ENCODE measurements at regions of chr11 and their contacts with region 1.

Region 1: GRCh38 chr11:121318848-121319834 is 26.6 kb downstream of the SC5D start:
- DNase-seq: no peak
- ATAC-seq: peak; percentile 87
- H3K4me3 Mint-ChIP-seq: no peak overlapping the region
- H3K27ac Mint-ChIP-seq: no peak overlapping the region
- H3K4me1 Mint-ChIP-seq: peaks cover 17% of the 10 kb centered on the region
- H3K27me3 Mint-ChIP-seq: peaks cover 2% of the 10 kb centered on the region
- CTCF ChIP-seq: peak; percentile 61

Region 2: DNA sequence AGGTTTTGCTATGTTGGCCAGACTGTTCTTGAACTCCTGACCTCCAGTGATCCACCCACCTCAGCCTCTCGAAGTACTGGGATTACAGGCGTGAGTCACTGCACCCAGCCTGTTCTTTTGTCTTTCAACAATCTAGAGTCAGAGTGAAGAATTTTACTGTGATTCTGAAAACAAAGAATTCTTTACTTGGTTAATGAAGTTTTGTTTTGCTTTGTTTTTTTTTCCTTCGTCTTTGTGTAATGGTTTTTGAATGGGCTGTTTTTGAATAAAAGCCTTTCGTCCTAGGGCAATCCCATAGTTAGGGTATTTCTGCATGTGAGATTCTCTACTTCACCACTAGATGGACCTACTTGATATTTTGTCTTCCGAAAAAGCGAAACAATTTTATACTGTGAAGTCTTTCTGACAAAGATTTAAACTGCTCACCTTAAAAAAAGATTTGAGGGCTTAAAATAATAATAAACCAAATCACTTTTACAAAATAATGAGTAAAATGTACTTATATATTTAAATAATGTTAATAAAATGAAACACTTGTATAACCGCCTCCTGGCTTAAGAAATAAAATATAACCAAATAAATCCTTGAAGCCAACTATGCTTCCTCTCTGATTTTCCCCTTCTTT is 70.0 kb before region 1 on chr11:
- CTCF ChIA-PET with region 1: no interaction called
- POLR2A ChIA-PET with region 1: no interaction called
- intact Hi-C with region 1: loop called (anchors 2 kb)
- DNase-seq: no peak
- ATAC-seq: peak; percentile 73
- H3K4me3 Mint-ChIP-seq: no peak overlapping the region
- H3K27ac Mint-ChIP-seq: no peak overlapping the region
- H3K4me1 Mint-ChIP-seq: peaks cover 3% of the 10 kb centered on the region
- H3K27me3 Mint-ChIP-seq: peaks cover 4% of the 10 kb centered on the region
- CTCF ChIP-seq: peak; percentile 72

Region 3: GRCh38 chr11:121292495-121293287 is 26.4 kb before region 1 on chr11 and contains the start of gene SC5D:
- CTCF ChIA-PET with region 1: no interaction called
- POLR2A ChIA-PET with region 1: no interaction called
- intact Hi-C with region 1: no loop called
- DNase-seq: peak; percentile 94
- ATAC-seq: peak; percentile 85
- H3K4me3 Mint-ChIP-seq: peak within 1 kb of the TSS; percentile 94
- H3K27ac Mint-ChIP-seq: peak within 1 kb of the TSS; percentile 97
- H3K4me1 Mint-ChIP-seq: peaks cover 50% of the 10 kb centered on the region
- H3K27me3 Mint-ChIP-seq: no peaks in the 10 kb centered on the region
- CTCF ChIP-seq: no peak
- total RNA-seq, gene SC5D: 35.2 and 40.4 TPM in 2 replicates

Region 4: DNA sequence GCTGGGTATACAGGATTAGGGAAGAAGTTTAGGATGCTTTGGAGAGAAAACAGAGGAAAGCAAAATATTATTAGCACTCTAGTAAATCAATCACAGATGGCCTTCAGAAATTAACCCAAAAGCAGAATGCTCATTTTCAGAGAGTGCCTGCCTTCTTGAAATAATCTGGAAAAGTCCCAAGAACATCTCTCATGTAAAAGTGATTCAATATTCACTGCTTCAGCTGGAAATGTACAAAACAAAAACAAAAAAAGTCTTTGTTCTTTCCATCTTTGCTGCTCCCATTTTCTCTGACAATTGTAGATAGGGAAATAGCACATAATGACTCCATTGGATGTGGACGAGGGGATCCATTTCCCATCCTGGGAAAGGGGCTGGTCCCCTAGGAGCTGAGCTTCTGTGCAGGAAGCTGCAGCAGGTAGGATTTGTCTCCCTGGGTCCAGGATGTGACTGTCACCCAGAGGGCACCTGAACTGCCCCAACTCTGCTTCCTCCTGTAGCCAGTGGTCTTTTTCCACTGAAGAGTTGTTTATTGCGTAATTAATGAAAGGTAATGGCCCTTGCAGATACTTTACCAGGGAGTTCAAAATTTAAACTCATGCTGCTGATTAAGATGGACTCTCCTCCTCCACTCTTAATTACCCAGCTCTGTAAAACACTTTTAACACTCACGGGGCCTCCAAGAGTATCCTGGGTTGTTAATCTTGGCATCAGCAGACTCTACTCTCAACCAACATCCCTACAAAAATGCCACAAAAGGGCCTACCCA is 31.4 kb after region 1 on chr11:
- CTCF ChIA-PET with region 1: no interaction called
- POLR2A ChIA-PET with region 1: no interaction called
- intact Hi-C with region 1: no loop called
- DNase-seq: no peak
- ATAC-seq: no peak
- H3K4me3 Mint-ChIP-seq: no peak overlapping the region
- H3K27ac Mint-ChIP-seq: no peak overlapping the region
- H3K4me1 Mint-ChIP-seq: peaks cover 2% of the 10 kb centered on the region
- H3K27me3 Mint-ChIP-seq: peaks cover 3% of the 10 kb centered on the region
- CTCF ChIP-seq: no peak

Region 5: DNA sequence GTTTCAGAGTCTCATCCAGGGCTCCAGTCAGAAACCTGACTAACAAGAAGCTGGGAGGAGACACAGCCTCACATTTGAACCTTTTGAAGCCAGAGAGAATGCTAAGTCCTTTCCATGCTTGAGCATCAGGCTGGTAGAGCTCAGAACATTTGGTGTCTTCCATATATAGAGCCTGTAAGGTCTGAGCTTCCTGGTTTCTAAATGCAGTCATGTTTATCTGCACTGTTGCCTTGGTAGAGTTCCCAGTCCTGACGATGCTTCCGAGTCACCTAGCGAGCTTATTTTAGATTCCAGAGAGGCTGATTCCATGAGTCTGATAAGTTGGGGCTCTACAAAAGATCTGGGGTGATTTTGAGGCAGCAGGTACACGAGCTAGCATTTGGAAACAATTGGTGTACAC is 64.6 kb after region 1 on chr11:
- CTCF ChIA-PET with region 1: interaction called, 5 read pairs
- POLR2A ChIA-PET with region 1: no interaction called
- intact Hi-C with region 1: loop called (anchors 1 kb)
- DNase-seq: no peak
- ATAC-seq: no peak
- H3K4me3 Mint-ChIP-seq: no peak overlapping the region
- H3K27ac Mint-ChIP-seq: no peak overlapping the region
- H3K4me1 Mint-ChIP-seq: peaks cover 12% of the 10 kb centered on the region
- H3K27me3 Mint-ChIP-seq: no peaks in the 10 kb centered on the region
- CTCF ChIP-seq: no peak

Region 6: DNA sequence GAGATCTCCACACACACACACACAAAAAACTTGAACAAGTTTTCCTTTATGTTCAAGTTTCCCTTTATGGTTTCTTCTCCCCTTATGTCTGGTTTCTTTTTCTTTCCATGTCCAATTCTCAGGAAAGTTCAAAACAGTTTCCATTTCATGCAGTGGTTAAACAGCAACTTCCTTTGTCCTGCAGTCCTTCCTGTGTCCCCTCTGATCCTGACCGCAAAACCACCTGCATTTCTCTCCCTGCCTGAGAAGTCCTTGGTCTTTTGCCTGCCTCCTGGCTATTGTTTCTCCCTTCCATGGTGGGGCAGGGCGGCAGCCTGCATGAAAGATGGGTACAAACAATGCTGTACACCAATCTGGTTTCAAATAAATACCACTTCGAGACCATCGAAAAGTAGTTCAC is 74.7 kb after region 1 on chr11:
- CTCF ChIA-PET with region 1: no interaction called
- POLR2A ChIA-PET with region 1: no interaction called
- intact Hi-C with region 1: no loop called
- DNase-seq: no peak
- ATAC-seq: no peak
- H3K4me3 Mint-ChIP-seq: no peak overlapping the region
- H3K27ac Mint-ChIP-seq: no peak overlapping the region
- H3K4me1 Mint-ChIP-seq: peaks cover 17% of the 10 kb centered on the region
- H3K27me3 Mint-ChIP-seq: no peaks in the 10 kb centered on the region
- CTCF ChIP-seq: no peak

Region 7: DNA sequence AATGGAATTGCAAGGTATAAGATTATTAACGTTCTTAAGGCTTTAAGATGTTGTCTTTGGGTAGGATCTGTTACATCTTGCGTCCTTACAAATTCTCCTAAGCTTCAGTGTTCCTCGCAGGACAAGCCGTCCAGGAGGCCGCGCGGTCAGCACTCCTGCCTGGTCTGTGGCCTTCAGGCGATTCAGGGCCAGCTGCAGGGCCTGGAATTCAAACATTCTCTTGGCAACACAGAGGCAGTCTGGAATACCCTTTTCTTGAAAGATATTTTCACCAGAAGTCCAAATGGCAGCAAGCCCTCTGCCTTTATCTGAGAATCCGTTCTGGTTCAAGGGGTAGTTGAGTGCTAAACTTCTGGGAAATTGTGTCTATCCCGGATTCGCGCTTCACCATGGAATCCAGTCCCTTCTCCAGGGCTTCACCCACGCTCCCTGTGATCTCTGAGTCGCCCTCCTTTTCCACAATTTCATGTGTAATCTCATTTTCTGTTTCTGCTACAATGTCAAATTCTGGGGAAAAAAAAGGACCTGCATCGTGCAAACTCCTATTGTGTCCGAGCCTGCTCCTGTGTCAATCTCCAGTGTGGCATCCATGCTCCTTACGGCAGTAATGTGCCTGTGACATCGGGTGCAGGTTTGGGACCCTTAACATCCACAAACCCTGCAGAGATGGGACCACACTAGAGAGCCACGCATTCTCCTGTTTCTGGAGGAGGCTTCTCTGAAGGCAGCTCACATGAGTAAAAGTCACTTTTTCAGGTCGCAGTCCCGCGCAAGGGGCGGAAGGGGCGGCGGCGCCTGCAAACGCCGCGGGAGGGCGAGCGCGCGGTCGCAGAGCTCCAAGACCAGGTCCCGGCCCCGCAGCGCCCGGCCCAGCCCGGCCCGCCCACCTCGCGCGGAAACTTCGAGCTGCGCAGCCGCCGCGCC is 107.6 kb after region 1 on chr11:
- CTCF ChIA-PET with region 1: interaction called, 3 read pairs
- POLR2A ChIA-PET with region 1: interaction called, 3 read pairs
- intact Hi-C with region 1: loop called (anchors 2 kb)
- DNase-seq: peak; percentile 58
- ATAC-seq: peak; percentile 43
- H3K4me3 Mint-ChIP-seq: peak overlapping the region; percentile 70
- H3K27ac Mint-ChIP-seq: peak overlapping the region; percentile 64
- H3K4me1 Mint-ChIP-seq: peaks cover 88% of the 10 kb centered on the region
- H3K27me3 Mint-ChIP-seq: peaks cover 2% of the 10 kb centered on the region
- CTCF ChIP-seq: no peak

Region 8: GRCh38 chr11:121464352-121464946 is 145.3 kb after region 1 on chr11:
- CTCF ChIA-PET with region 1: interaction called, 4 read pairs
- POLR2A ChIA-PET with region 1: interaction called, 9 read pairs
- intact Hi-C with region 1: loop called (anchors 5 kb)
- DNase-seq: no peak
- ATAC-seq: peak; percentile 51
- H3K4me3 Mint-ChIP-seq: peak overlapping the region; percentile 61
- H3K27ac Mint-ChIP-seq: peak overlapping the region; percentile 89
- H3K4me1 Mint-ChIP-seq: peaks cover 97% of the 10 kb centered on the region
- H3K27me3 Mint-ChIP-seq: no peaks in the 10 kb centered on the region
- CTCF ChIP-seq: no peak

Region 9: DNA sequence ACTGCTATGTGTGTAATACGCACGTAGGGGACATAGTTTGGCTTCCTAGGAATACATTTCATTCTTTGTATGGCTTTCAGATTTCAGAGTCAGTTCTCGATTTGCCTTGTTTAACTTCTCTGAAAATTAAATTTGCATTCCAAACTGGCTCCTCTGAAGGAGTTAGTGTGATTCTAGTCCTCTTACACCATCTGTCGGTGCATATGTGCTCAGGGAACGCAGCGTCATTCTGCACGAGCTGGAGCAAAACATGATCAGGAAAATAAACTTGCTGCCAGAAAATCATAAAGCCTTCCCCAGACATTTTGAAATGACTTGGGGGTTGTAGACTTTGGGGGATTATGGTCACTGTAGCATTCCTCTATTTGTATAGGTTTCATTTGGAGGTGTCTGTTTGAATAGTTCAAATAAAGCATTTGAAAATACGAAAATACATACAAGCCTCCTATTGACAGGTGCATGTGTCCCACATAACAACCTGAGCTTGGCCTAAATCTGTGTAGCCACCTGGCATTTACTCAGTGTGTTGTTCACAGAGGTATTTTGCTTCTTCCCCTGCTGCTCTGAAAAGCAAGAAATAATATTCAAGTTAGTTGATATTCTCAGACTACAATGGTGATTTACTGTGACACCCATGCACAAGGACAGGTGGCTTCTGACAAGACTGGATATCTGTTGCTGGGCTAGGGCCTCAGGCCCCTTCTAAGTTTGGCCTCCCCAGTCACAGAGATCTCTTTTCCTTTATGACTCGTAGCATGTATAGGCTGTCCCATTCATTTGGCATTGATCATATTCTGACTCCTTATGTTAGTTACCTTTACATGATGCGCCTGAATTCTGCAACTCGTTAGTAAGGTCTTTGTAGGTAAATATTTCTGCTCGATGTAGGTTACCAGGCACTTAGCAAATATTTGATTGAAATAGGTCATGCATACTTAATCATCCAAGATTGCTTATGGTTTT is 215.3 kb after region 1 on chr11:
- CTCF ChIA-PET with region 1: interaction called, 3 read pairs
- POLR2A ChIA-PET with region 1: no interaction called
- intact Hi-C with region 1: loop called (anchors 1 kb)
- DNase-seq: no peak
- ATAC-seq: no peak
- H3K4me3 Mint-ChIP-seq: no peak overlapping the region
- H3K27ac Mint-ChIP-seq: no peak overlapping the region
- H3K4me1 Mint-ChIP-seq: peaks cover 36% of the 10 kb centered on the region
- H3K27me3 Mint-ChIP-seq: no peaks in the 10 kb centered on the region
- CTCF ChIP-seq: no peak

Region 10: DNA sequence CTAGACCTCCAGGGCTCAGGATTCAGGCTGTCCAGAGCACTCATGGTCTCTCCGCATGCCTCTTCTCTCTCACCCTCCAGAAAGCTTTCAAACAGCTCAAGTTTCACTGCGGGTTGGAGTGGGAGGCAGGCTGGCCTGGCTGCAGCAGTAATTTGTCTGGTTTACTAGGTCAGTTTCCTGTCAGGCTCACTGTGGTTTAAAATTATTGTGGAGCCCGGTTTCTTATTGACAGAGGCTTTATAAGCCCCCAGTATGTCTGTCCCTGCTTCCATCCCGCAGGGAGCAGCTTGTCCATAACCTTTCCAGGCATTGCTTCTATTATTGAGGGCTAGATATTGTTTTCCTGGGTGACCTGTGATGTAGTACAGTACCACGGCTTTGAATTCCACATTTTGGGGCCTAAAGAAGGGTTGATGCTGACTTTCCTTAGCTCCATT is 368.9 kb after region 1 on chr11:
- CTCF ChIA-PET with region 1: no interaction called
- POLR2A ChIA-PET with region 1: no interaction called
- intact Hi-C with region 1: no loop called
- DNase-seq: no peak
- ATAC-seq: no peak
- H3K4me3 Mint-ChIP-seq: no peak overlapping the region
- H3K27ac Mint-ChIP-seq: no peak overlapping the region
- H3K4me1 Mint-ChIP-seq: no peaks in the 10 kb centered on the region
- H3K27me3 Mint-ChIP-seq: peaks cover 20% of the 10 kb centered on the region
- CTCF ChIP-seq: no peak